ENCODE measurements at regions of chr18 and their contacts with region 1.

Region 1: GRCh38 chr18:44826418-44827259 is 146.0 kb downstream of the SETBP1 start:
- DNase-seq: peak; percentile 69 to 80
- ATAC-seq: peak; percentile 81 to 90
- H3K4me3 ChIP-seq: peak overlapping the region in 3 of 4 donors; percentile 0 to 10 (median 6)
- H3K27ac ChIP-seq: peak overlapping the region; percentile 69 to 85 (median 74)
- H3K4me1 ChIP-seq: peaks cover 52 to 57% of the 10 kb centered on the region in 2 donors
- H3K27me3 ChIP-seq: no peaks in the 10 kb centered on the region
- CTCF ChIP-seq: no peak
- POLR2A ChIP-seq: no peak

Region 2: GRCh38 chr18:44895176-44895798 is 68.6 kb after region 1 on chr18:
- in situ Hi-C with region 1: no loop called
- intact Hi-C with region 1: loop called (anchors 5 kb)
- DNase-seq: peak; percentile 32 to 69
- ATAC-seq: peak; percentile 85 to 97
- H3K4me3 ChIP-seq: no peak overlapping the region
- H3K27ac ChIP-seq: no peak overlapping the region
- H3K4me1 ChIP-seq: peaks cover 14 to 25% of the 10 kb centered on the region in 2 donors
- H3K27me3 ChIP-seq: no peaks in the 10 kb centered on the region
- CTCF ChIP-seq: peak; percentile 42 to 65 (median 54)
- POLR2A ChIP-seq: no peak

Measured in gastrocnemius medialis (tissue), 4 donors.